Activated CD8-positive, alpha-beta memory T cell treated with anti-CD3 and anti-CD28 coated beads, Interleukin-2, amount 10 ng/mL, durations not matched to agents 7 days and 5 days (primary cell): ENCODE measurements at regions of chr10 and their contacts with region 1.

Region 1: GRCh38 chr10:96513698-96514561 is at the start of gene TLL2:
- DNase-seq: peak; percentile 73
- ATAC-seq: peak; percentile 83
- H3K4me3 Mint-ChIP-seq: peak within 1 kb of the TSS; percentile 60
- H3K27ac Mint-ChIP-seq: no peak within 1 kb of the TSS
- H3K4me1 Mint-ChIP-seq: peaks cover 18% of the 10 kb centered on the region
- H3K27me3 Mint-ChIP-seq: peaks cover 61% of the 10 kb centered on the region
- total RNA-seq, gene TLL2: not detected

Region 2: DNA sequence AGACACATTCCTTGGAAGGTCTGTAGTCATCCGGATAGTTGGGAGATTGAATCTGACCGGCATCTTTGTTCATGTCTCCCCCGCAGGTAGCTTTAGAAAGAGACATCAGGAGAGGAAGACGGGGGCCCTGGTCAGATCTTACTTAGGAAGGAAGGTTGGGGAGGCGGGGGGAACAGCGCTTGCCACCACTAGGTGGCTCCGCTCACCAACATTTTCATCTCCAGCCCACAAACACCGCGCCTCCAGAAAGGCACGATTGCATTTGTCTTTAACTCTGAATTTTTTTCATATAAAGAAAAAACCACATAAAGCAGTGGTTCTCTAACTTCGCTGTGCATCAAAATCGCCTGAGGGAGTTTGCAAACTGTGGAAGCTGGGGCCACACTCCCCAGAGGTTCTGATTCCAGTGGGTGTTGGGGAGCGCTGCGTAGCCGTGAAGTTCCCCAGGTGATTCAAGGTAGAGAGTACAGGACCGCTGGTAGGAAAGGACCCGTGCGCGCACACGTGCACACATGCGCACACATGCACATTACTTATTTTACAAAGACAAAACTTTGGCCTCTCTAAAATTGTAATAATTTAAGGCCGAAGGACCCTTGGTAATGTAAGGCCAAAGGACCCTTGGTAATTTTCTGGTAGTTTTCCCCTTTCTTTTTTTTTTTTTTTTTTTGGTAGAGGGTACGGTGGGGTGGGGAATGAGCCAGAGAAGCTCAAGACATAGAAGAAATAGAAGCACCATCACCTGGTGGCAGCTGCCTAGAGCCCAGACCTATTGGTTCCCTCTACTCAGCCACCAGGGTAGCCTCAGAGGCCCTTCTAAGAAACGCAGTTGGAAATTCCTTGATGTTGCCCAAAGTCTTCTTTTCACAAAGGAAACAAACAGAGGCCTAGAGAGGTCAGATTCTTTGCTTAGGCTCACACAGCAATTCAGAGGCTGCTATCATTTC is 117.7 kb before region 1 on chr10:
- CTCF ChIA-PET with region 1: interaction called, 11 read pairs
- DNase-seq: peak; percentile 71
- ATAC-seq: peak; percentile 92
- H3K4me3 Mint-ChIP-seq: no peak overlapping the region
- H3K27ac Mint-ChIP-seq: no peak overlapping the region
- H3K4me1 Mint-ChIP-seq: no peaks in the 10 kb centered on the region
- H3K27me3 Mint-ChIP-seq: peaks cover 52% of the 10 kb centered on the region

Region 3: GRCh38 chr10:96496281-96496925 is 17.5 kb before region 1 on chr10:
- CTCF ChIA-PET with region 1: interaction called, 14 read pairs
- DNase-seq: no peak
- ATAC-seq: no peak
- H3K4me3 Mint-ChIP-seq: no peak overlapping the region
- H3K27ac Mint-ChIP-seq: no peak overlapping the region
- H3K4me1 Mint-ChIP-seq: no peaks in the 10 kb centered on the region
- H3K27me3 Mint-ChIP-seq: peaks cover 31% of the 10 kb centered on the region

Region 4: DNA sequence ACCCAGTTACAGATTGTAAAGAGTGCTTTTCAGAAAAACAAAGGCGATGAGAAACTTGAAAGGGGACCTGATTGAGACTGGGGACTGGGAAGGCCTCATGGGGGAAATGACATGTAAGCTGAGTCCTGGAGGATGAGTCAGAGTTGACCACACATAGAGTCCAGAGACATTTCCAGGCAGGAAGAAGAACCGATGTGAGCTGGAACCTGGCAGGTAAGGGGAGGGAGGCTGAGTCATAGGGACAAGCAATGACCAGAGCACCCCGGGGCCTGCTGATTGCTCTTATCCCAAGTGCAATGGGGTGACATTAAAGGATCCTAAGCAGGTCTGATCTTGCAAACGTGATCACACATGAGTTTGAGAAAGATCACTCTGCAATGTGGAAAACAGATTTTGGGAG is 11.9 kb before region 1 on chr10:
- CTCF ChIA-PET with region 1: interaction called, 14 read pairs
- DNase-seq: no peak
- ATAC-seq: no peak
- H3K4me3 Mint-ChIP-seq: no peak overlapping the region
- H3K27ac Mint-ChIP-seq: no peak overlapping the region
- H3K4me1 Mint-ChIP-seq: no peaks in the 10 kb centered on the region
- H3K27me3 Mint-ChIP-seq: peaks cover 19% of the 10 kb centered on the region

Region 5: DNA sequence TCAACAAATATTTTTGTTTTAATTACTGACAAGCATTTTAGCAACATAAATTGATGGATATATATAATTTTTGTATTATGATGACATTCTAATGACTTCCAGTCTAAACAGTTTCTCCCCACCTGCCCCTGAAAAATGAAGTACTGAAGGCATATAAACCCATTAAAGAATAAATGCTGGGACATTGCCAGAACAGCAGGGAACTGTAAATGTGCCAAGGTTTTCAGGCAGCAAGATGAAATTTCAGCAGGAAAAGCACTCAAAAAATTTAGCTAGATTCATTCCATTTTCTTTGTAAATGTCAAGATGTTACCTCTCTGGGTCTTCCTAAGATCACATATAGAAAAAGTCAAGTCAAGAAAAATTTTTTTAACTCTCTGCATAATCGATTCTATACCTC is 10.8 kb after region 1 on chr10:
- CTCF ChIA-PET with region 1: interaction called, 15 read pairs
- DNase-seq: no peak
- ATAC-seq: no peak
- H3K4me3 Mint-ChIP-seq: no peak overlapping the region
- H3K27ac Mint-ChIP-seq: no peak overlapping the region
- H3K4me1 Mint-ChIP-seq: no peaks in the 10 kb centered on the region
- H3K27me3 Mint-ChIP-seq: no peaks in the 10 kb centered on the region